ENCODE measurements at regions of chr9 and their contacts with region 1.

Region 1: GRCh38 chr9:89032173-89032572 is 40.9 kb downstream of the S1PR3 start:
- DNase-seq: no peak
- H3K4me3 ChIP-seq: no peak overlapping the region
- H3K27ac ChIP-seq: no peak overlapping the region
- H3K4me1 ChIP-seq: peaks cover 0 to under 1% (median 0%) of the 10 kb centered on the region in 4 donors
- H3K27me3 ChIP-seq: no peaks in the 10 kb centered on the region
- CTCF ChIP-seq: no peak
- EP300 ChIP-seq: no peak
- POLR2A ChIP-seq: no peak

Region 2: DNA sequence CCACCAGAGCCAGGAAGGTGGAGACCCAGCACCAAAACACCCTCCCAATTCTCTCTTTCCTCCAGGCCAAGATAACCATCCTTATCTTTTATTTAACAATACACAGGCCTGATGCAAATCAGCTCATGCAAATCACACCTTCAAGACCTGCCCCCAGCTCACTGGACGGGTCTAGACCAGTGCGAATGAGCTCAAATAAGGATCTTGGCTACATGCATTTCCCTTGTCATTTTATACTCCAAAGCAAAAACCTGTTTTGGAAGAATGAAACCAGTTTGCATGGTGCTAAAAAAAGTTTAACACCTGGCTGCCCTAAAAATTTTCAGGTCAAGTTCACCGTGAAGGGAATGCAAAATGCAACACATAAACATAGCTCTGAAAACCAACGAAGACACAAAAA is 1566.3 kb before region 1 on chr9:
- in situ Hi-C with region 1: no loop called
- intact Hi-C with region 1: loop called (anchors 5 kb)
- DNase-seq: no peak
- H3K4me3 ChIP-seq: no peak overlapping the region
- H3K27ac ChIP-seq: no peak overlapping the region
- H3K4me1 ChIP-seq: no peaks in the 10 kb centered on the region
- H3K27me3 ChIP-seq: no peaks in the 10 kb centered on the region
- CTCF ChIP-seq: no peak
- EP300 ChIP-seq: no peak
- POLR2A ChIP-seq: no peak

Region 3: GRCh38 chr9:88733651-88734421 is 298.3 kb before region 1 on chr9:
- in situ Hi-C with region 1: no loop called
- intact Hi-C with region 1: no loop called
- DNase-seq: no peak
- H3K4me3 ChIP-seq: no peak overlapping the region
- H3K27ac ChIP-seq: no peak overlapping the region
- H3K4me1 ChIP-seq: no peaks in the 10 kb centered on the region
- H3K27me3 ChIP-seq: no peaks in the 10 kb centered on the region
- CTCF ChIP-seq: no peak
- EP300 ChIP-seq: no peak
- POLR2A ChIP-seq: no peak